B cell (primary cell): ENCODE measurements at regions of chr4 and their contacts with region 1.

Region 1: DNA sequence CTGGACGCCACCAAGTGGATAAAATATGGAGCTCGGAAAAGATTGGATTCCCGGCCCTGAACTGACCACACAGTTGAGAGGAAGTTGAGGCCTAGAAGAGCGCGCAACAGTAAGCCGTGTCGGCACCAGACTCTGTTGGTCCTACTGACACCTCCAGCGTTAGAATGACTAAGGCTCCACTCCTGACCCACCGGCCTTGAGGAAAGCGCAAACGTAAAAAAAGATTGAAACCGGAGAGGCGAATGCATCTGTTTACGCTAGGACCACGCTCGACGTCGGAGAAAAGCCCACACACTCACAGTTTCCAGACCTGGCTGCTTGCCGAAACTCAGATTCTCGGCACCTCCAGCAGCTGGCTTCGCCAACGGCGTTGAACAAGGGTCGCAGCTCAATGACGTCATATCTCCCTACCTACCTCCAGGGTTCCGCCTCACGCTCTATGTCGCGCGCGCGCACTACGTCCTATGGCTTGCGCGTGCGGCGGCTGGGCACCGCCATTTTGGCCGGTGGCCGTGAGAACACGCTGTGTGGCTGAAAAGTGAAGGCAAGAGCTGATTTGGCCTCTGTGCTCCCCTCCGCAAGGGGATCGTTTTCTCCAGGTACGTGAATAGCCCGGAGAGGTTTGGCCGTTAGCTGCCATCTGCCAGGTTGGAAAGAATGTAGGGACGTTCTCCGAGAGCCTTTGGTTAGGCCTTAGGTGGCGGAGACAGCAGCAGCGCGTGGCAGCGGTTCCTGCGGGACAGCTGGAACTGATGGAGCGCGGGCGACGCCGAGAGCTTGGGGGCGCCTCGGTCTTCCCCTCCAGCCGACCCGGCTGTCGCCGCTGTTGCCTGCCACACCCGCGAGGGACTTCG is at the starts of genes ABCE1 and ANAPC10:
- DNase-seq: peak; percentile 97
- ATAC-seq: peak; percentile 93
- H3K4me3 ChIP-seq: peak within 1 kb of the TSS; percentile 66 to 94 (median 79)
- H3K4me3 Mint-ChIP-seq: peak within 1 kb of the TSS; percentile 98
- H3K27ac ChIP-seq: peak within 1 kb of the TSS; percentile 89 to 90
- H3K27ac Mint-ChIP-seq: peak within 1 kb of the TSS; percentile 98
- H3K4me1 ChIP-seq: peaks cover 36 to 46% of the 10 kb centered on the region in 2 donors
- H3K4me1 Mint-ChIP-seq: peaks cover 42% of the 10 kb centered on the region
- H3K27me3 ChIP-seq: no peaks in the 10 kb centered on the region
- H3K27me3 Mint-ChIP-seq: no peaks in the 10 kb centered on the region
- CTCF ChIP-seq: no peak
- total RNA-seq, gene ABCE1: 46.2 and 51.0 TPM in 2 replicates
- total RNA-seq, gene ANAPC10: 18.9 and 19.4 TPM in 2 replicates

Region 2: DNA sequence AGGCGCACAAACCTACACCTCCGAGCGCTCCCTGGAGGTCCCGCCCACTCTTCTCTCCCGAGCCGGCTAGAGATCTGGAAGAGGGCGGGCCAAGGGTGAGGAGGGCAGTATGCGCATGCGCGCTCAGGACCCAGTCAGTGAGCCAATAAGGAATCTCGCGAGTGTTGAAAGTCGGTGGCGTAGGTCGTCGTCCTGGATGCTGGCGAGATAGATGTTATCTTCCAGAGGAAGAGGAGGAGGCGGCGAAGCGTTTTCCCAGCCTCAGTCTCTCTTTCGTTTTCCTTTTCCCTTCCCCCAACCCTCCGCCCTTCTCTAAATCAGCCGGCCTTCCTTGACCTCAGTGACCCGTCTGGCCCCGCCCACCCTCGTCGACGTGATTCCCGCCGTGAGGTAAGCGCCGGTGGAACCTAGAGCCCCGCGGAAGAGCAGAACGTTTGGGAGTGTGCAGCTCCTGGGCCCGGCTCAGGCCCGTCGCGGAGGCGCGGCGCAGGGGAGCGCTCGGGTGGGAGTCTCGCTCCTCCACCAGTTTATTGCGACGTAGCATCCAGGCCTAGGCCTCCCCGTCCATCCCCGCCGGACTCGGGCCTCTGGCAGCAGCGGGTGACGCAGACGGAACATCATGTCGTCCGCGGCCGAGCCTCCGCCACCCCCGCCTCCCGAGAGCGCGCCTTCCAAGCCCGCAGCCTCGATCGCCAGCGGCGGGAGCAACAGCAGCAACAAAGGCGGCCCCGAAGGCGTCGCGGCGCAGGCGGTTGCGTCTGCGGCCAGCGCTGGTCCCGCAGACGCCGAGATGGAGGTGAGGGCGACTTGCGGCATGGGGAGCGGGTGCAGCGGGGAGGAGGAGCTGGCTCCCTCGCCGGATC is 1584.5 kb before region 1 on chr4 and contains the start of gene SMARCA5:
- CTCF ChIA-PET with region 1: no interaction called
- POLR2A ChIA-PET with region 1: interaction called, 3 read pairs
- intact Hi-C with region 1: loop called (anchors 5 kb)
- DNase-seq: peak; percentile 99
- ATAC-seq: peak; percentile 88
- H3K4me3 ChIP-seq: peak within 1 kb of the TSS; percentile 81 to 97 (median 93)
- H3K4me3 Mint-ChIP-seq: peak within 1 kb of the TSS; percentile 100
- H3K27ac ChIP-seq: peak within 1 kb of the TSS; percentile 94 to 99
- H3K27ac Mint-ChIP-seq: peak within 1 kb of the TSS; percentile 100
- H3K4me1 ChIP-seq: peaks cover 28 to 29% of the 10 kb centered on the region in 2 donors
- H3K4me1 Mint-ChIP-seq: peaks cover 39% of the 10 kb centered on the region
- H3K27me3 ChIP-seq: no peaks in the 10 kb centered on the region
- H3K27me3 Mint-ChIP-seq: peaks cover 8% of the 10 kb centered on the region
- CTCF ChIP-seq: no peak
- total RNA-seq, gene SMARCA5: 48.7 and 53.1 TPM in 2 replicates

Region 3: GRCh38 chr4:143558823-143559756 is 1539.0 kb before region 1 on chr4:
- CTCF ChIA-PET with region 1: no interaction called
- POLR2A ChIA-PET with region 1: no interaction called
- intact Hi-C with region 1: loop called (anchors 1 kb)
- DNase-seq: peak; percentile 81
- ATAC-seq: peak; percentile 85
- H3K4me3 ChIP-seq: peak overlapping the region; percentile 57 to 75 (median 65)
- H3K4me3 Mint-ChIP-seq: peak overlapping the region; percentile 89
- H3K27ac ChIP-seq: peak overlapping the region; percentile 65 to 75
- H3K27ac Mint-ChIP-seq: peak overlapping the region; percentile 88
- H3K4me1 ChIP-seq: peaks cover 7 to 20% of the 10 kb centered on the region in 2 donors
- H3K4me1 Mint-ChIP-seq: peaks cover 26% of the 10 kb centered on the region
- H3K27me3 ChIP-seq: no peaks in the 10 kb centered on the region
- H3K27me3 Mint-ChIP-seq: no peaks in the 10 kb centered on the region
- CTCF ChIP-seq: peak; percentile 65

Region 4: GRCh38 chr4:145180298-145181090 is 82.4 kb after region 1 on chr4 and contains the start of gene OTUD4:
- CTCF ChIA-PET with region 1: interaction called, 3 read pairs
- POLR2A ChIA-PET with region 1: interaction called, 3 read pairs
- intact Hi-C with region 1: loop called (anchors 1 kb)
- DNase-seq: peak; percentile 97
- ATAC-seq: peak; percentile 82
- H3K4me3 ChIP-seq: peak within 1 kb of the TSS; percentile 68 to 93 (median 81)
- H3K4me3 Mint-ChIP-seq: peak within 1 kb of the TSS; percentile 94
- H3K27ac ChIP-seq: peak within 1 kb of the TSS; percentile 94 to 97
- H3K27ac Mint-ChIP-seq: peak within 1 kb of the TSS; percentile 96
- H3K4me1 ChIP-seq: peaks cover 29 to 35% of the 10 kb centered on the region in 2 donors
- H3K4me1 Mint-ChIP-seq: peaks cover 34% of the 10 kb centered on the region
- H3K27me3 ChIP-seq: no peaks in the 10 kb centered on the region
- H3K27me3 Mint-ChIP-seq: no peaks in the 10 kb centered on the region
- CTCF ChIP-seq: peak; percentile 31
- total RNA-seq, gene OTUD4: 51.0 and 55.7 TPM in 2 replicates